CD4-positive, alpha-beta T cell (primary cell): ENCODE measurements at regions of chr17 and their contacts with region 1.

Region 1: GRCh38 chr17:34703533-34703932 is 124.2 kb downstream of the TMEM132E start:
- DNase-seq: peak in 5 of 14 experiments; percentile 7 to 31 (median 23)
- ATAC-seq: no peak
- H3K4me3 ChIP-seq: no peak overlapping the region
- H3K4me3 Mint-ChIP-seq: no peak overlapping the region
- H3K27ac ChIP-seq: no peak overlapping the region
- H3K27ac Mint-ChIP-seq: no peak overlapping the region
- H3K4me1 ChIP-seq: no peaks in the 10 kb centered on the region
- H3K4me1 Mint-ChIP-seq: no peaks in the 10 kb centered on the region
- H3K27me3 ChIP-seq: peaks cover 11 to 18% of the 10 kb centered on the region in 2 experiments
- H3K27me3 Mint-ChIP-seq: peaks cover 75% of the 10 kb centered on the region
- CTCF ChIP-seq: no peak

Region 2: DNA sequence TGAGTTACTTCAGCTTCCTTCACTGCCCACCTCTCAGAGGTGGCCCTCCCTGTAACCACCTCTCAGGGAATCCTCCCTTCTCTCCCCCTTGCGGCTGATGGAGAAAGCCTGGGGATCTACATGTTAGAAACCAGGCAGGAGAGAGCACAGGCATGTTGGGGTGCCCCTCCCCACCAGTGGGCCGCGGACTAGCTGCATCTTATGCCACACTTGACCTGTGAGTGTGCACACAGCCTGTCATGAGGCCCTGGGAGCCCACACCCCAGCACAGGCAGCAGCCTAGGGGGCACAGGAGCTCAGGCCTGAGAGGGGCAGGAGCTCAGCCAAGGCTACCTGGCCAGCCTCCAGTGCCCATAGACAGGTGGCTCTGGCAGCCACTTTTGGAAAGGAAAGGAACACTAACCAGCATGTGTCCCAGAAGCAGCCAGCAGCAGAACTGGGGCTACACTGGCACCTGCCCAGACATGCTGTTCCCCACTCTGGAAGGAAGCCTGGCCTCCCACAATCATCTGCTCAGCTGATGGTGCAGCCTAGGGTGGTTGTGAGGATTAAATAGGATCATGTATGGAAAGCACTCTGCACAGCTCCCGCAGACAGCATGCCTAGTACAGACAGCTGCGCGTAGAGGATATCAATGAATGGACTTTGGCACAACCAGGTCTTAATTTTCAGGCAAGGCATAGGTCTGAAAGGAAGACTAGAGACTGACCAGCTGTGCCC is 63.7 kb before region 1 on chr17:
- CTCF ChIA-PET with region 1: no interaction called
- POLR2A ChIA-PET with region 1: no interaction called
- intact Hi-C with region 1: no loop called
- DNase-seq: no peak
- ATAC-seq: no peak
- H3K4me3 ChIP-seq: no peak overlapping the region
- H3K4me3 Mint-ChIP-seq: no peak overlapping the region
- H3K27ac ChIP-seq: no peak overlapping the region
- H3K27ac Mint-ChIP-seq: no peak overlapping the region
- H3K4me1 ChIP-seq: peaks cover 18% of the 10 kb centered on the region
- H3K4me1 Mint-ChIP-seq: peaks cover 6% of the 10 kb centered on the region
- H3K27me3 ChIP-seq: peaks cover 0 to 5% of the 10 kb centered on the region in 2 experiments
- H3K27me3 Mint-ChIP-seq: peaks cover 19% of the 10 kb centered on the region
- CTCF ChIP-seq: no peak

Region 3: GRCh38 chr17:34654276-34654880 is 49.2 kb before region 1 on chr17:
- CTCF ChIA-PET with region 1: no interaction called
- POLR2A ChIA-PET with region 1: no interaction called
- intact Hi-C with region 1: no loop called
- DNase-seq: no peak
- ATAC-seq: no peak
- H3K4me3 ChIP-seq: no peak overlapping the region
- H3K4me3 Mint-ChIP-seq: no peak overlapping the region
- H3K27ac ChIP-seq: no peak overlapping the region
- H3K27ac Mint-ChIP-seq: no peak overlapping the region
- H3K4me1 ChIP-seq: no peaks in the 10 kb centered on the region
- H3K4me1 Mint-ChIP-seq: no peaks in the 10 kb centered on the region
- H3K27me3 ChIP-seq: peaks cover 3 to 8% of the 10 kb centered on the region in 2 experiments
- H3K27me3 Mint-ChIP-seq: peaks cover 35% of the 10 kb centered on the region
- CTCF ChIP-seq: no peak

Region 4: DNA sequence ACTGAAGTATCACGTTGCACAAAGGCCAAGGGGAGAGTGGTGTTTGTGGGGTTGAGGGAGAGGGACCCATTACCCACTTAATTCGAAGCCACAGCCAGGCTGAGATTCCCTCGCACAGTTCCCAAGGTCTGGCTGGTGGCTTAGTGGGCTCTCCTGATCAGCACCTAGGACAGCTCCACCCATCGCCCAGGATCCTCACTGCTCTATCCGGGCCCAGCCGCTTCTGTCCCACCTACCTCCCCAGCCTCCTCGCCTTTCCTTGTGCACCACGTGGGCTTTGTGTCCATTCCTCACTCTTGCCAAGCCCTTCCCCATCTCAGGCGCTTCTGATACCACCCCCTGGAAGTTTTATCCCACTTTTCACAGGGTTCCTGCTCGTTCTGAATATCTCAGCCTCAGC is 94.2 kb after region 1 on chr17:
- CTCF ChIA-PET with region 1: no interaction called
- POLR2A ChIA-PET with region 1: no interaction called
- intact Hi-C with region 1: loop called in 1 of 2 experiments (anchors 5 kb)
- DNase-seq: peak in 6 of 14 experiments; percentile 2 to 34 (median 14)
- ATAC-seq: no peak
- H3K4me3 ChIP-seq: no peak overlapping the region
- H3K4me3 Mint-ChIP-seq: no peak overlapping the region
- H3K27ac ChIP-seq: no peak overlapping the region
- H3K27ac Mint-ChIP-seq: no peak overlapping the region
- H3K4me1 ChIP-seq: no peaks in the 10 kb centered on the region
- H3K4me1 Mint-ChIP-seq: no peaks in the 10 kb centered on the region
- H3K27me3 ChIP-seq: peaks cover 2 to 6% of the 10 kb centered on the region in 2 experiments
- H3K27me3 Mint-ChIP-seq: peaks cover 43% of the 10 kb centered on the region
- CTCF ChIP-seq: no peak